Heart right ventricle (tissue), 16 donors: ENCODE measurements at regions of chr20 and their contacts with region 1.

Region 1: DNA sequence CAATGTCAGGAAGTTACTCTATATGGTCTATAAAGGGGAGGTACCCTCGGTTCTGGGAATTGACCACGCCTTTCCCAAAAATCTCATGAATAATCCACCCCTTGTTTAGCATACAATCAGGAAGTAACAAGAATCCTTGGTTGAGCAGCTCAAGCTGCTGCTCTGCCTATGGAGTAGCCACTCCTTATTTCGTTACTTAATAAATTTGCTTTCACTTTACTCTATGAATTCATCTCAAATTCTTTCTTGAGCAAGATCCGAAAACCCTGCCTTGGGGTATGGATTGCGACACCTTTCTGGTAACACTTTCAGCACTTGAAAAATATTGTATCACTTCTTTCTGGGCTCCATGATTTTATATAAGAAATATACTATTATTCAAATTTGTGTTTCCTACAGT is 243.1 kb downstream of the BMP2 start:
- DNase-seq: no peak
- ATAC-seq: no peak
- H3K4me3 ChIP-seq: no peak overlapping the region
- H3K27ac ChIP-seq: no peak overlapping the region
- H3K4me1 ChIP-seq: no peaks in the 10 kb centered on the region
- H3K27me3 ChIP-seq: no peaks in the 10 kb centered on the region
- CTCF ChIP-seq: no peak

Region 2: GRCh38 chr20:7057611-7058010 is 47.0 kb after region 1 on chr20:
- intact Hi-C with region 1: loop called in 1 of 10 experiments (anchors 2 kb)
- DNase-seq: no peak
- ATAC-seq: no peak
- H3K4me3 ChIP-seq: no peak overlapping the region
- H3K27ac ChIP-seq: no peak overlapping the region
- H3K4me1 ChIP-seq: no peaks in the 10 kb centered on the region
- H3K27me3 ChIP-seq: no peaks in the 10 kb centered on the region
- CTCF ChIP-seq: no peak